OCI-LY7 (cell line): ENCODE measurements at regions of chr17 and their contacts with region 1.

Region 1: GRCh38 chr17:68457539-68458259 is 403 bp upstream of the WIPI1 start:
- DNase-seq: peak; percentile 100
- H3K4me3 ChIP-seq: peak overlapping the region; percentile 67
- H3K27ac ChIP-seq: peak overlapping the region; percentile 83
- H3K4me1 ChIP-seq: peaks cover 73% of the 10 kb centered on the region
- CTCF ChIP-seq: no peak

Region 2: GRCh38 chr17:68080411-68081150 is 377.1 kb before region 1 on chr17:
- CTCF ChIA-PET with region 1: no interaction called
- POLR2A ChIA-PET with region 1: no interaction called
- intact Hi-C with region 1: no loop called
- DNase-seq: no peak
- H3K4me3 ChIP-seq: no peak overlapping the region
- H3K27ac ChIP-seq: no peak overlapping the region
- H3K4me1 ChIP-seq: peaks cover 8% of the 10 kb centered on the region
- CTCF ChIP-seq: no peak

Region 3: GRCh38 chr17:68247445-68248198 is 210.1 kb before region 1 on chr17 and contains the start of gene AMZ2:
- CTCF ChIA-PET with region 1: interaction called, 5 read pairs
- POLR2A ChIA-PET with region 1: interaction called, 35 read pairs
- intact Hi-C with region 1: no loop called
- DNase-seq: peak; percentile 97
- H3K4me3 ChIP-seq: peak within 1 kb of the TSS; percentile 80
- H3K27ac ChIP-seq: peak within 1 kb of the TSS; percentile 90
- H3K4me1 ChIP-seq: peaks cover 86% of the 10 kb centered on the region
- CTCF ChIP-seq: no peak
- total RNA-seq, gene AMZ2: 105 and 117 TPM in 2 replicates

Region 4: GRCh38 chr17:68291844-68292695 is 165.6 kb before region 1 on chr17:
- CTCF ChIA-PET with region 1: no interaction called
- POLR2A ChIA-PET with region 1: interaction called, 67 read pairs
- intact Hi-C with region 1: loop called (anchors 2 kb)
- DNase-seq: peak; percentile 96
- H3K4me3 ChIP-seq: peak overlapping the region; percentile 85
- H3K27ac ChIP-seq: peak overlapping the region; percentile 94
- H3K4me1 ChIP-seq: peaks cover 51% of the 10 kb centered on the region
- CTCF ChIP-seq: peak; percentile 75

Region 5: DNA sequence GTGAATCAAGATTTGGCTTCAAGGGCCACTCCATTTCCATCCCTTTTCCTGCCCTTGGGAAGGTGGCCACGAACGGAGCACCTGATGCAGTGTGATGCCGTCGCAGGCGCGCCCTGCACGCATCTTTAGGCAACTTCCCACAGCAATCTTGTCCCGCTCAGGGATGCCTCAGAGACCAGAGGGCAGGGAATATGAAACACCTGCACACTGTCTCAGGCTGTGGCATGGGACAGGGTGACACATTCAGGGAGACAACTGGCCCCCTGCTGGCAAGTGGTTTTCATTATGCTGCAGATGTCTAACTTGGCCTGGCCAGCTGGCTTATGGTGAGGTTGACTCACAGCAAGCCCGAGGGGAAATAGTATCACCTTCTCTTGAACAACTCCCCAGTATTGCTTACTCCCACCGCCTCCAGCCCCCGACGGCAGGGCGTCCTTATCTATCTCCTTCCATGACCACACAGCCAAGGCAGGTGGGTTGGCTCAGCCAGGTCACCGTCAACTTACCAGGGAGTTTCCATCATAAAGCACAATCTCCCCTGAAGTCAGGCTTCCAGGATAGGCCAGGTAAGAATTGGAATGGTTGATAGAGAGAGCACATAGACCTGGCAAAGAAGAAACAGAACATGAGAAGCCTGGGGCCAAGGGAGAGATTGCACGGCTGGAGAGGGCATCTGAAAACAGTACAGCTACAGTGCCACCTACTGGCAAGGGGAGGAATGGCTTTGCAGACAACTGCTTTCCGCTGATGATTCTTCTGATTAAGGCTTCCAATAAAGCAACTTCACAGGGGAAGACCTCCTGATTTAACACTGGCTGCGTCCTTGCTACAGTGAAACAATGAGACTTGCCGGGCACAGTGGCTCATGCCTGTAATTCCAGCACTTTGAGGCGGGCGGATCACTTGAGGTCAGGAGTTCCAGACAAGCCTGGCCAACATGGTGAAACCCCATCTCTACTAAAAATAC is 21.5 kb before region 1 on chr17:
- CTCF ChIA-PET with region 1: interaction called, 8 read pairs
- POLR2A ChIA-PET with region 1: interaction called, 138 read pairs
- intact Hi-C with region 1: loop called (anchors 1 kb)
- DNase-seq: peak; percentile 93
- H3K4me3 ChIP-seq: peak overlapping the region; percentile 15
- H3K27ac ChIP-seq: peak overlapping the region; percentile 80
- H3K4me1 ChIP-seq: peaks cover 64% of the 10 kb centered on the region
- CTCF ChIP-seq: peak; percentile 95

Region 6: GRCh38 chr17:68446626-68447041 is 11.1 kb before region 1 on chr17:
- CTCF ChIA-PET with region 1: interaction called, 8 read pairs
- POLR2A ChIA-PET with region 1: interaction called, 138 read pairs
- intact Hi-C with region 1: loop called (anchors 1 kb)
- DNase-seq: no peak
- H3K4me3 ChIP-seq: no peak overlapping the region
- H3K27ac ChIP-seq: no peak overlapping the region
- H3K4me1 ChIP-seq: peaks cover 9% of the 10 kb centered on the region
- CTCF ChIP-seq: no peak

Region 7: GRCh38 chr17:68491381-68492231 is 33.9 kb after region 1 on chr17:
- CTCF ChIA-PET with region 1: interaction called, 4 read pairs
- POLR2A ChIA-PET with region 1: interaction called, 18 read pairs
- intact Hi-C with region 1: no loop called
- DNase-seq: peak; percentile 85
- H3K4me3 ChIP-seq: peak overlapping the region; percentile 19
- H3K27ac ChIP-seq: peak overlapping the region; percentile 75
- H3K4me1 ChIP-seq: peaks cover 56% of the 10 kb centered on the region
- CTCF ChIP-seq: no peak